HEK293 (cell line): ENCODE measurements at regions of chr17 and their contacts with region 1.

Region 1: DNA sequence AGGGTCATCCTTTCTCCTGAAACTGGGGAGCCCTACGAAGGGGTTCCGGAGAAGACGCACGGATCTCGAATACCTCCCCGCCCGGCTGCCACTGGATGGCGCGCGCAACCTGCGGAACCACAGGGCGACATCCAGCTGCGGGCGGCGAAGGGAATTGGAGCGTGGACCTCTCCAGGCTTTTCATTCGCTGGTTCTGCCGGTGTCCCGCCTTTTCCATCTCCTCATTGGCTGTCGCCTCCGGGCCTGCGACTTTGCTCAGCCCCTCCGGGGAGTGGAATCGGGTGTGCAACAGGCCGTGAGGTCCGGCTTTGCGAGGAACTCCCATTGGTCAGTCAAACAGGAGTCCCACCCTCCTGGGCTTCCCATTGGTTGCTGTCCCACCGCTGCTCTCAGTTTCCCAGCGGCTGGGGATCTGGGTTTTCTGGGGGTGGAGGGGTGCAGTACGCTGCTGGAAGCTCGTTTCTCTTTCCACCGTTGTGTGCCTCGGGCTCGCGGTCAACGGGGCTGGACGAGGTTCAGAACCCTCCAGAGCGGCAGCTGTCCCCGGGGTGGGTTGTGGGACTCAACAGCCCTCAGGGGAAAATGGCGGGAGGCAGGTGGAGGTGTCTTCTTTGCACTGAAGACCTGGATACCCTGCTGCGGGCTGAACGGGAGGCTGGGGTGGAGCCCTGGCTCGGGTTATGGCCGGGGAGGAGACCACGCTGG is 14.5 kb downstream of the OR1D5 start:
- H3K4me3 ChIP-seq: peak overlapping the region; percentile 62
- H3K27ac ChIP-seq: peak overlapping the region; percentile 27; the same call in 1 of the 2 replicates
- H3K4me1 ChIP-seq: peaks cover 2% of the 10 kb centered on the region; the same call in 1 of the 2 replicates
- CTCF ChIP-seq: peak; percentile 97

Region 2: GRCh38 chr17:3647769-3648555 is 599.0 kb after region 1 on chr17:
- CTCF ChIA-PET with region 1: interaction called, 30 read pairs
- POLR2A ChIA-PET with region 1: no interaction called
- H3K4me3 ChIP-seq: no peak overlapping the region
- H3K27ac ChIP-seq: no peak overlapping the region
- H3K4me1 ChIP-seq: no peaks in the 10 kb centered on the region
- CTCF ChIP-seq: peak; percentile 78